Stomach (tissue), 19 donors: ENCODE measurements at regions of chr12 and their contacts with region 1.

Region 1: GRCh38 chr12:51424662-51425438 is at the start of gene SLC4A8:
- DNase-seq: peak; percentile 68 to 97
- H3K4me3 ChIP-seq: peak within 1 kb of the TSS; percentile 52 to 72 (median 62)
- H3K27ac ChIP-seq: peak within 1 kb of the TSS in 1 of 5 donors; percentile 27
- H3K4me1 ChIP-seq: peaks cover 14 to 17% (median 16%) of the 10 kb centered on the region in 4 donors
- H3K27me3 ChIP-seq: peaks cover 0 to 40% (median 13%) of the 10 kb centered on the region in 3 donors
- CTCF ChIP-seq: peak in 5 of 7 experiments; percentile 39 to 78 (median 69)
- EP300 ChIP-seq: no peak
- POLR2A ChIP-seq: no peak
- total RNA-seq, gene SLC4A8: 0.29 to 9.7 (median 1.8) TPM

Region 2: DNA sequence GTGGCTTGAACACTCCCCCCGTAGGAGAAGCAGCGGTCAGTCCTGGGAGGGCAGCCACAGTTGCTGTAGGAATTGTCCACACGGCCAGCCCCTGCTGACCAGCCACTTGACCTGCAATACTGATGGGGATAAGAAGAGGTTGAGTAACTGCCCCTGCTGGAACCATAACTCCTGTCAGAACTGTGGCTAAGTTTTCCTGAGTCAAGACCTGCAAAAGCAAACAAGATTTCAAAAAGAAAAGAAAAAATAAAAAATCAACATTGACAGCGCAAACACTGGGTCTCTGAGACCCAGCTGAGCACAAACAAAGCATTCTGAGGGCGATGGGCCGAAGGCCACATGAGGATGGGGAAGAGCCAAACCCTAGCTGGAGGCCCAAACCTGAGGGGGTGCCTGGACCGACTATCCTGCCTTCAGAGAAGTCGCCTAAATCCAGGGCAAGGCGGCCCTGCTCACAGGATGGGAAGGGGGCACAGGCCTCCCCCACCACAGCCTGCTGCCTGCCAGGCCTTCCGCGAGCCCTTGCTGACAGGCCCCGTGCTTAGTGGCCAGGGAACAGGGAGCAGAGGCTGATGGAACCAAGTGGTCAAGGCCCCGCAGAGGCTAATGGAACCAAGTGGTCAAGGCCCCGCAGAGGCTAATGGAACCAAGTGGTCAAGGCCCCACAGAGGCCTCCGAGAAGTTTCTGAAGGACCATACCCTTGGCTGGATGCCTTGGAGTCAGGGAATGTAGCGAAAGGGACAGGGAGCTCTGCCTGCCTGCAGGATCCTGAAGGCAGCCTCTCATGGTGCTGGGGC is 226.1 kb before region 1 on chr12:
- intact Hi-C with region 1: no loop called
- DNase-seq: peak in 1 of 2 donors; percentile 25
- H3K4me3 ChIP-seq: no peak overlapping the region
- H3K27ac ChIP-seq: no peak overlapping the region
- H3K4me1 ChIP-seq: no peaks in the 10 kb centered on the region
- H3K27me3 ChIP-seq: no peaks in the 10 kb centered on the region
- CTCF ChIP-seq: no peak
- EP300 ChIP-seq: no peak
- POLR2A ChIP-seq: no peak

Region 3: GRCh38 chr12:51357374-51358047 is 67.3 kb before region 1 on chr12:
- intact Hi-C with region 1: no loop called
- DNase-seq: no peak
- H3K4me3 ChIP-seq: no peak overlapping the region
- H3K27ac ChIP-seq: no peak overlapping the region
- H3K4me1 ChIP-seq: no peaks in the 10 kb centered on the region
- H3K27me3 ChIP-seq: no peaks in the 10 kb centered on the region
- CTCF ChIP-seq: no peak
- EP300 ChIP-seq: no peak
- POLR2A ChIP-seq: no peak

Region 4: DNA sequence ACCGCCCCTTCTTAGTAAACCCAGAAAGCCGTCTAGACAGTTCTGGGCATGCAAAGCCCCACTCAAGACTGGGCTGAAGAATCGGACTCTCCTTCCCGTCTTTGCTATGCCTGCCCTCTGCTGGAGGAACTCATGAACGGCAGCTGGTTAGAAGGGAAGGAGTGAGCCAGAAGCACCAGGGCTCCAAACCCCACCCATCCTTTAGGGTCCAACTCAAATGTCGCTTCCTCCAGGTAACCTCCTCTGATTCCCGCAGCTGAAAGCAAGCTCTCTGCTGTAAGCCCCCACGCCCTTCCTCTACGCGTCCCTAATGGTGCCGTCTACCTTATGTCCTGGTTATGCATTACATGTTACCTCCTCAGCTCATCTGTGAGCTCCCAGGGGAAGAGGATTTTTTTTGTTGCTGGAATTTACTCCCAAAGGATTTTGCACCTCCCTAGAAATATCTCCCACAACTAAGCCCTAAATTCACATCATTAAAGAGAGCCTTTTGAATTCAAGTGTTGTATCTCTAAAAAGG is 107.2 kb after region 1 on chr12:
- intact Hi-C with region 1: loop called (anchors 5 kb)
- DNase-seq: peak; percentile 83 to 92
- H3K4me3 ChIP-seq: no peak overlapping the region
- H3K27ac ChIP-seq: no peak overlapping the region
- H3K4me1 ChIP-seq: peaks cover 0 to 8% (median 4%) of the 10 kb centered on the region in 4 donors
- H3K27me3 ChIP-seq: peaks cover 0 to 64% (median under 1%) of the 10 kb centered on the region in 3 donors
- CTCF ChIP-seq: peak in 5 of 7 experiments; percentile 74 to 90 (median 82)
- EP300 ChIP-seq: no peak
- POLR2A ChIP-seq: no peak

Region 5: DNA sequence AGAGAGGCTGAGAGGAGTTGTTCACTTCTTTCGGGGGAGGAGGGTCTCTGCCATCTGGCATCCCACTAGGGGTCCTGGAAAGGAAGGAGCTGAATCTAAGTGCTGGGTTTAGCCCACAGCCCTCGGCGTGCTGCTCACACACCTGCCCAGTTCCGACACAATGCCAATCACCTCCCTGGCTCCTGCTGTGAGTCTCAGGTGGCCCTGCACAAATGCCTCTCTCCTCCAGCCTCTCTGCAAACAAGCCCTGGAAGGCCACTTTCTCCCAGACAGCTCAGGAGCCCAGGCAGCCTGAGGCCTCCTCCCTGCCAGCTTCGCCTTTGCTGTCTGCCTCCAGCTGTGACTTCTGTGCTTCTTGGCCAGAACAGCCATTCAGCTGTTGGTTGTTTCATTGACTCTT is 705.9 kb after region 1 on chr12:
- intact Hi-C with region 1: no loop called
- DNase-seq: peak in 1 of 2 donors; percentile 21
- H3K4me3 ChIP-seq: no peak overlapping the region
- H3K27ac ChIP-seq: no peak overlapping the region
- H3K4me1 ChIP-seq: peaks cover 0 to 17% (median 13%) of the 10 kb centered on the region in 4 donors
- H3K27me3 ChIP-seq: peaks cover 0 to under 1% (median 0%) of the 10 kb centered on the region in 3 donors
- CTCF ChIP-seq: no peak
- EP300 ChIP-seq: no peak
- POLR2A ChIP-seq: no peak